ENCODE measurements at regions of chr7 and their contacts with region 1.

Region 1: GRCh38 chr7:35185907-35186731 is 67.8 kb downstream of the TBX20 start:
- DNase-seq: peak; percentile 58
- H3K4me3 ChIP-seq: peak overlapping the region; percentile 70
- H3K27ac ChIP-seq: peak overlapping the region; percentile 89
- H3K4me1 ChIP-seq: peaks cover 17% of the 10 kb centered on the region
- H3K27me3 ChIP-seq: peaks cover 13% of the 10 kb centered on the region
- CTCF ChIP-seq: no peak

Region 2: DNA sequence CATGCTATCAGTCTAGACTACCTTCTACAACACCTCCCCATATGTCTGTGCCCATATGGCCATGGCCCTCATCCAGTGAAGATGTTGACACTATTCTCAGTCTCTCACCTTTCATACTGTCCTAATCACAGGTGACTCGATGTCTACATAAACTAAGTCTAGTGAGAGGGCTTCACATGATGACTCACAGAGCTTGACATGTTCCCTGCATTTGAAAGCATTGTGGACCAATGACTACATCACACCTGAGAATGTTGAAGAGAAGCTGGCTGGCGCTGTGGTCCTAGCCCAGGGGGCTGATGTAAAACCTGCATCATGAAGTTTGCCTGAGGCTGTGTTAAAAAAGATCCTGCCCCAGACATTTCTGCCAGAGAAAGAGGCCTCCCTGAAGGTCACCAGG is 360.9 kb before region 1 on chr7:
- intact Hi-C with region 1: no loop called
- DNase-seq: no peak
- H3K4me3 ChIP-seq: no peak overlapping the region
- H3K27ac ChIP-seq: no peak overlapping the region
- H3K4me1 ChIP-seq: no peaks in the 10 kb centered on the region
- H3K27me3 ChIP-seq: no peaks in the 10 kb centered on the region
- CTCF ChIP-seq: no peak

Region 3: GRCh38 chr7:35037526-35038339 is 148.4 kb before region 1 on chr7:
- intact Hi-C with region 1: no loop called
- DNase-seq: peak; percentile 96
- H3K4me3 ChIP-seq: peak overlapping the region; percentile 73
- H3K27ac ChIP-seq: peak overlapping the region; percentile 94
- H3K4me1 ChIP-seq: peaks cover 40% of the 10 kb centered on the region
- H3K27me3 ChIP-seq: no peaks in the 10 kb centered on the region
- CTCF ChIP-seq: peak; percentile 87

Region 4: GRCh38 chr7:35519971-35520809 is 334.1 kb after region 1 on chr7:
- intact Hi-C with region 1: loop called (anchors 10 kb)
- DNase-seq: peak; percentile 77
- H3K4me3 ChIP-seq: no peak overlapping the region
- H3K27ac ChIP-seq: peak overlapping the region; percentile 43
- H3K4me1 ChIP-seq: peaks cover 27% of the 10 kb centered on the region
- H3K27me3 ChIP-seq: peaks cover 4% of the 10 kb centered on the region
- CTCF ChIP-seq: peak; percentile 92

Measured in left ventricle myocardium inferior (tissue), 1 donor.